ENCODE measurements at regions of chr3 and their contacts with region 1.

Region 1: GRCh38 chr3:172106989-172107388 is 67.6 kb downstream of the FNDC3B start:
- DNase-seq: peak; percentile 73
- ATAC-seq: peak; percentile 57
- H3K4me3 Mint-ChIP-seq: peak overlapping the region; percentile 54
- H3K27ac Mint-ChIP-seq: peak overlapping the region; percentile 82
- H3K4me1 Mint-ChIP-seq: peaks cover 73% of the 10 kb centered on the region
- H3K27me3 Mint-ChIP-seq: no peaks in the 10 kb centered on the region

Region 2: GRCh38 chr3:171753665-171754408 is 353.2 kb before region 1 on chr3:
- CTCF ChIA-PET with region 1: no interaction called
- POLR2A ChIA-PET with region 1: no interaction called
- intact Hi-C with region 1: loop called in 1 of 2 experiments (anchors 5 kb)
- DNase-seq: peak; percentile 21
- ATAC-seq: peak; percentile 88
- H3K4me3 Mint-ChIP-seq: no peak overlapping the region
- H3K27ac Mint-ChIP-seq: no peak overlapping the region
- H3K4me1 Mint-ChIP-seq: peaks cover 2% of the 10 kb centered on the region
- H3K27me3 Mint-ChIP-seq: peaks cover 14% of the 10 kb centered on the region

Region 3: GRCh38 chr3:172039436-172040077 is 67.4 kb before region 1 on chr3 and contains the start of gene FNDC3B:
- CTCF ChIA-PET with region 1: interaction called, 10 read pairs
- POLR2A ChIA-PET with region 1: interaction called, 4 read pairs
- intact Hi-C with region 1: loop called (anchors 1 kb)
- DNase-seq: peak; percentile 95
- ATAC-seq: peak; percentile 93
- H3K4me3 Mint-ChIP-seq: peak within 1 kb of the TSS; percentile 86
- H3K27ac Mint-ChIP-seq: peak within 1 kb of the TSS; percentile 88
- H3K4me1 Mint-ChIP-seq: peaks cover 24% of the 10 kb centered on the region
- H3K27me3 Mint-ChIP-seq: peaks cover 2% of the 10 kb centered on the region
- total RNA-seq, gene FNDC3B: 10.5 to 14.2 TPM

Region 4: GRCh38 chr3:172094621-172095557 is 12.1 kb before region 1 on chr3:
- CTCF ChIA-PET with region 1: interaction called, 7 read pairs
- POLR2A ChIA-PET with region 1: interaction called, 5 read pairs
- intact Hi-C with region 1: loop called (anchors 1 to 2 kb)
- DNase-seq: peak; percentile 38
- ATAC-seq: peak; percentile 66
- H3K4me3 Mint-ChIP-seq: no peak overlapping the region
- H3K27ac Mint-ChIP-seq: no peak overlapping the region
- H3K4me1 Mint-ChIP-seq: peaks cover 46% of the 10 kb centered on the region
- H3K27me3 Mint-ChIP-seq: no peaks in the 10 kb centered on the region

Region 5: DNA sequence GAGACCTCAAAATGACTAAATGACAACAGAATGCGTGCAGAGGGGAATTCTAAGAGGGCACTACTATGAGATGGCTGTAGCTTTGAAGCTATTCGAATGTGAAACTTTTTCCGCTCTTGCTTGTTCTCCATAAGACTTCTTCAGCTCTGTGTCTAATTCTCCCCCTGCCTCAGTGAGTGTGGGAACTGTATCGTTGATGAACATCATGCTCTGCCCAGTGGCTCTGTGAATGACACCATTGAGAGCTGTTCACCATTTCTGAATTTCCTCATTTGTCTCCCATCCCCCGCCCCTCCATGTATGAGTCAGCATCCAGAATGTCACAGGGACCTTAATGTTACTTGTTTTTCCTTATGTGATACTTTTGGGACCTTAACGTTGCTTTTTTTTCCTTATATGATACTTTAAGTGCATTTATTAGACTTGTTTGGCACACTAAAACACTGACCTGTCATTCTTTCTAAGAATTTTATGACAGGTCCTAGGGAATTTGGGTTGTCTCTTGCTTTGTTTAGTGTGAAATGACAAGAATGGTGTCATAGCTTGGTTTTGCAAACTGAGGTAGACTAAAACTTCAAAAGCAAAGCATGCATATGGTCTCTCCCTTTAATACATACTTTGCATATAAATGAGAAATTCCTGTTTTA is 31.9 kb after region 1 on chr3:
- CTCF ChIA-PET with region 1: interaction called, 4 read pairs
- POLR2A ChIA-PET with region 1: interaction called, 3 read pairs
- intact Hi-C with region 1: loop called in 1 of 2 experiments (anchors 2 kb)
- DNase-seq: peak; percentile 68
- ATAC-seq: peak; percentile 62
- H3K4me3 Mint-ChIP-seq: no peak overlapping the region
- H3K27ac Mint-ChIP-seq: peak overlapping the region; percentile 77
- H3K4me1 Mint-ChIP-seq: peaks cover 47% of the 10 kb centered on the region
- H3K27me3 Mint-ChIP-seq: no peaks in the 10 kb centered on the region

Region 6: GRCh38 chr3:172181932-172182586 is 75.1 kb after region 1 on chr3:
- CTCF ChIA-PET with region 1: no interaction called
- POLR2A ChIA-PET with region 1: no interaction called
- intact Hi-C with region 1: no loop called
- DNase-seq: no peak
- ATAC-seq: peak; percentile 53
- H3K4me3 Mint-ChIP-seq: no peak overlapping the region
- H3K27ac Mint-ChIP-seq: no peak overlapping the region
- H3K4me1 Mint-ChIP-seq: peaks cover 17% of the 10 kb centered on the region
- H3K27me3 Mint-ChIP-seq: no peaks in the 10 kb centered on the region

Region 7: GRCh38 chr3:172562871-172563863 is 456.2 kb after region 1 on chr3:
- CTCF ChIA-PET with region 1: no interaction called
- POLR2A ChIA-PET with region 1: no interaction called
- intact Hi-C with region 1: loop called in 1 of 2 experiments (anchors 1 kb)
- DNase-seq: peak; percentile 64
- ATAC-seq: peak; percentile 67
- H3K4me3 Mint-ChIP-seq: peak overlapping the region; percentile 42
- H3K27ac Mint-ChIP-seq: peak overlapping the region; percentile 75
- H3K4me1 Mint-ChIP-seq: peaks cover 31% of the 10 kb centered on the region
- H3K27me3 Mint-ChIP-seq: no peaks in the 10 kb centered on the region